ENCODE measurements at regions of chr12 and their contacts with region 1.

Region 1: DNA sequence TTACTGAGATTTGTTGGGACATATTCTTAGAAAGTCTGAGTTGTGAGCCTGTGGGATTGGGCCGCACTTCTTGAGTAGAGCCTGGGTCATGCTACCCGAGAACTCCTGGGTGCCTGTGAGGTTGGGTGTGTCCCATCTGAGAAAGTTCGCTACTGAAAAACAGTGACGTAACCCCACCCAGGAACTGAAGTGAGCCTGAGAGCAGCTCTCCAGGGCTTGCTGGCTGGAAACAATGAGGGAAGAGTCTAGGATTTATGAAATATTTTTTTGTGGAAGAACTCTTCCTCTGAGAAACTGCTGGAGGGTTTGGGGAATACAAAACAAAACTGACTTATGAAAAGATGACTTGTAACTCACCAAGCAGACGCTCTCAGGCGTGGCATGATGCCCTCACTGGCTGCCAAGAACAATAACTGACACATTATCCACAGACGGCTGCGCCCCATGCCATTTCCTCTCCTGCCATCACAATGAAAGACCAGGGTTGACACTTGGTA is 69.2 kb downstream of the RASSF3 start:
- DNase-seq: peak; percentile 96
- H3K4me3 Mint-ChIP-seq: peak overlapping the region; percentile 60
- H3K27ac Mint-ChIP-seq: peak overlapping the region; percentile 87
- H3K4me1 Mint-ChIP-seq: peaks cover 39% of the 10 kb centered on the region
- H3K27me3 Mint-ChIP-seq: no peaks in the 10 kb centered on the region
- CTCF ChIP-seq: no peak

Region 2: GRCh38 chr12:64560396-64561304 is 118.9 kb before region 1 on chr12:
- CTCF ChIA-PET with region 1: interaction called, 6 read pairs
- POLR2A ChIA-PET with region 1: no interaction called
- intact Hi-C with region 1: loop called (anchors 2 kb)
- DNase-seq: peak; percentile 86
- H3K4me3 Mint-ChIP-seq: no peak overlapping the region
- H3K27ac Mint-ChIP-seq: peak overlapping the region; percentile 78
- H3K4me1 Mint-ChIP-seq: peaks cover 17% of the 10 kb centered on the region
- H3K27me3 Mint-ChIP-seq: no peaks in the 10 kb centered on the region
- CTCF ChIP-seq: no peak

Region 3: DNA sequence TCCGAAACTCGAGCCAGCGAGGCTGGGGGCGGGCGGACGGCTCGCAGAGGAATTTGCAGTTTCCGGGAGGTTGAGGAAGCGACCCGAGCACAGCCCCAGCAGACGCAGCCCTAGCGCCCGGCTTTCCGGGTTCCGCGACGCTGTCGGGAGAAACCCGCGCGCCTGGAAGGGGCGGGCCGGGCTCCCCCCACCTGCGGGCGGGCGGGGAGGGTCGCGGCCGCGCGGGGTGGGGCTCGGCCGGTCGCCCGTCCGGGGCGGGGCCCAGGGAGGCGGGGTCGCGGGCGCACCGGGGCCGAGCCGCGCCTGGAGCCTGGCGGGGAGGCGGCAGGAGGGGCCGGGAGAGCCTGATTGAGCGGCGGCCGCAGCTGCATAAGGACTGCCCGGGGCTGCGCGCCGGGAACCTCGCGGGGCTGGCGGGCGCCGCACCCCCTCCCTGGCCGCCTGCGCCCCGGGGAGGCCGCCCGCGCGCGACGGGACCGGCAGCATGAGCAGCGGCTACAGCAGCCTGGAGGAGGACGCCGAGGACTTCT is 69.3 kb before region 1 on chr12 and contains the start of gene RASSF3:
- CTCF ChIA-PET with region 1: interaction called, 49 read pairs
- POLR2A ChIA-PET with region 1: interaction called, 124 read pairs
- intact Hi-C with region 1: loop called (anchors 1 kb)
- DNase-seq: peak; percentile 71
- H3K4me3 Mint-ChIP-seq: peak within 1 kb of the TSS; percentile 80
- H3K27ac Mint-ChIP-seq: peak within 1 kb of the TSS; percentile 90
- H3K4me1 Mint-ChIP-seq: peaks cover 14% of the 10 kb centered on the region
- H3K27me3 Mint-ChIP-seq: no peaks in the 10 kb centered on the region
- CTCF ChIP-seq: no peak
- total RNA-seq, gene RASSF3: 30.5 and 30.6 TPM in 2 replicates

Region 4: GRCh38 chr12:64625243-64626077 is 54.1 kb before region 1 on chr12:
- CTCF ChIA-PET with region 1: interaction called, 4 read pairs
- POLR2A ChIA-PET with region 1: interaction called, 33 read pairs
- intact Hi-C with region 1: loop called (anchors 1 kb)
- DNase-seq: peak; percentile 79
- H3K4me3 Mint-ChIP-seq: peak overlapping the region; percentile 73
- H3K27ac Mint-ChIP-seq: peak overlapping the region; percentile 94
- H3K4me1 Mint-ChIP-seq: peaks cover 26% of the 10 kb centered on the region
- H3K27me3 Mint-ChIP-seq: no peaks in the 10 kb centered on the region
- CTCF ChIP-seq: no peak

Region 5: GRCh38 chr12:64663033-64663432 is 16.5 kb before region 1 on chr12:
- CTCF ChIA-PET with region 1: interaction called, 6 read pairs
- POLR2A ChIA-PET with region 1: interaction called, 14 read pairs
- intact Hi-C with region 1: no loop called
- DNase-seq: peak; percentile 60
- H3K4me3 Mint-ChIP-seq: no peak overlapping the region
- H3K27ac Mint-ChIP-seq: no peak overlapping the region
- H3K4me1 Mint-ChIP-seq: peaks cover 25% of the 10 kb centered on the region
- H3K27me3 Mint-ChIP-seq: no peaks in the 10 kb centered on the region
- CTCF ChIP-seq: no peak

Region 6: GRCh38 chr12:64669270-64669842 is 10.2 kb before region 1 on chr12:
- CTCF ChIA-PET with region 1: interaction called, 10 read pairs
- POLR2A ChIA-PET with region 1: interaction called, 41 read pairs
- intact Hi-C with region 1: loop called (anchors 1 kb)
- DNase-seq: no peak
- H3K4me3 Mint-ChIP-seq: peak overlapping the region; percentile 42
- H3K27ac Mint-ChIP-seq: peak overlapping the region; percentile 67
- H3K4me1 Mint-ChIP-seq: peaks cover 61% of the 10 kb centered on the region
- H3K27me3 Mint-ChIP-seq: no peaks in the 10 kb centered on the region
- CTCF ChIP-seq: no peak